GM12878 (cell line): ENCODE measurements at regions of chr16 and their contacts with region 1.

Region 1: GRCh38 chr16:67326472-67327309 is at the starts of genes KCTD19 and LRRC36:
- DNase-seq: no peak
- ATAC-seq: peak; percentile 72
- H3K4me3 ChIP-seq: peak within 1 kb of the TSS; percentile 74
- H3K27ac ChIP-seq: peak within 1 kb of the TSS; percentile 29; the same call in 1 of the 2 replicates
- H3K4me1 ChIP-seq: peaks cover 22% of the 10 kb centered on the region
- H3K27me3 ChIP-seq: no peaks in the 10 kb centered on the region; a peak in 1 of 4 replicates
- CTCF ChIP-seq: peak; percentile 31 to 51 (median 46)
- EP300 ChIP-seq: no peak
- POLR2A ChIP-seq: peak; percentile 40; the same call in 1 of the 2 replicates
- RAD21 ChIP-seq: no peak
- polyA plus RNA-seq, gene KCTD19: 1.6 to 2.5 TPM
- polyA plus RNA-seq, gene LRRC36: 0.69 to 0.79 TPM

Region 2: DNA sequence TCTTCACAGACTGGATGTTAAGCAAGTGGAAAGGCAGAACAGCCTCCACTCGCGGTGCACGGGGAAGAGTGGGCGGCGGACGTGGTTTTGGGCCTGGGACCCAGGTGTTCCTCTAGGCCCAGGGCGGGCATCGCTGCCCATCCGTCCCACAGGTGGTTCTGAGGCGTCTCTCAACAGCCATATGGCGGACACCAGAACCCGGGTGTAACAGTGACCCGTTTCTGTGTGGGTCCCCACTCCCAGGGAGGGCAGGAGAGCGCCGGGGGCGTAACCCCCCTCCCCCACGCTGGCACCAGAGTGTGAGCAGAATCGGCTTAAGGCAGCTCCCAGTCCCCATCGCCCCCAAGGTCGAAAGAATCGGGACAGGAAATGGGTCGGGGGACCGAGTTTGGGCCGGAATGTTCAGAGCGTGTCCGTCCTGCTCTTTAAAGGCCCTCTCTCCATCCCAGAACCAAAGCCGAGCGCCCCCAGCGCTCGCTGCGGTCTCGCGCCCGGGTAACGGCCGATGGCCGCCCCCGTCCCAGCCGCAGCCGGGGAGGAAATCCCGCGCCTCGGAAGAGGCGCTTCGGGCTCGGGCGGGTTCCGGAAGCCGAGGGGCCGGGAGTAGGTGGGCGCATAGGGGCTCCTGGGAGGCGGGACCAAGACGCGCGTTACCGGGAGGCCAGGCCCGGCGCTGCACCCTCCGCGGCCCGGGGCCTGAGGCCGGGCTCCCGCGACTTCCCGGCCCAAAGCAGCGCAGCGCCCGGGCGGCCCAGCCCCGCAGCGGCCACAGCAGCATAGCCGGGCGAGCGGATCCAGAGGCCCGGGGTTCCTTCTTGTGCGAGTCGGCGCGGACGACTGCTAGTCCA is 777.2 kb before region 1 on chr16 and contains the start of gene TK2:
- CTCF ChIA-PET with region 1: no interaction called
- POLR2A ChIA-PET with region 1: no interaction called
- RAD21 ChIA-PET with region 1: no interaction called
- SMC1A ChIA-PET with region 1: no interaction called
- in situ Hi-C with region 1: no loop called
- intact Hi-C with region 1: no loop called
- DNase-seq: no peak
- ATAC-seq: peak; percentile 47
- H3K4me3 ChIP-seq: peak within 1 kb of the TSS; percentile 69
- H3K27ac ChIP-seq: peak within 1 kb of the TSS; percentile 38; the same call in 1 of the 2 replicates
- H3K4me1 ChIP-seq: peaks cover 23% of the 10 kb centered on the region
- H3K27me3 ChIP-seq: no peaks in the 10 kb centered on the region
- CTCF ChIP-seq: peak in 2 of 3 experiments; percentile 15 to 19; a peak in 1 of 6 replicates
- EP300 ChIP-seq: no peak
- POLR2A ChIP-seq: peak; percentile 80
- RAD21 ChIP-seq: no peak
- polyA plus RNA-seq, gene TK2: 1.3 TPM

Region 3: GRCh38 chr16:67159593-67160406 is 166.9 kb before region 1 on chr16 and contains the starts of genes FBXL8 and TRADD:
- CTCF ChIA-PET with region 1: no interaction called
- POLR2A ChIA-PET with region 1: no interaction called
- RAD21 ChIA-PET with region 1: no interaction called
- SMC1A ChIA-PET with region 1: no interaction called
- in situ Hi-C with region 1: no loop called
- intact Hi-C with region 1: no loop called
- DNase-seq: no peak
- ATAC-seq: peak; percentile 75
- H3K4me3 ChIP-seq: peak within 1 kb of the TSS; percentile 95
- H3K27ac ChIP-seq: peak within 1 kb of the TSS; percentile 89
- H3K4me1 ChIP-seq: peaks cover 50% of the 10 kb centered on the region
- H3K27me3 ChIP-seq: peaks cover 0 to 7% of the 10 kb centered on the region in 2 experiments; a peak in 1 of 4 replicates
- CTCF ChIP-seq: peak; percentile 37 to 61 (median 50)
- EP300 ChIP-seq: no peak
- POLR2A ChIP-seq: peak; percentile 86
- RAD21 ChIP-seq: no peak
- polyA plus RNA-seq, gene FBXL8: not detected
- polyA plus RNA-seq, gene TRADD: 1.7 to 3.5 TPM

Region 4: DNA sequence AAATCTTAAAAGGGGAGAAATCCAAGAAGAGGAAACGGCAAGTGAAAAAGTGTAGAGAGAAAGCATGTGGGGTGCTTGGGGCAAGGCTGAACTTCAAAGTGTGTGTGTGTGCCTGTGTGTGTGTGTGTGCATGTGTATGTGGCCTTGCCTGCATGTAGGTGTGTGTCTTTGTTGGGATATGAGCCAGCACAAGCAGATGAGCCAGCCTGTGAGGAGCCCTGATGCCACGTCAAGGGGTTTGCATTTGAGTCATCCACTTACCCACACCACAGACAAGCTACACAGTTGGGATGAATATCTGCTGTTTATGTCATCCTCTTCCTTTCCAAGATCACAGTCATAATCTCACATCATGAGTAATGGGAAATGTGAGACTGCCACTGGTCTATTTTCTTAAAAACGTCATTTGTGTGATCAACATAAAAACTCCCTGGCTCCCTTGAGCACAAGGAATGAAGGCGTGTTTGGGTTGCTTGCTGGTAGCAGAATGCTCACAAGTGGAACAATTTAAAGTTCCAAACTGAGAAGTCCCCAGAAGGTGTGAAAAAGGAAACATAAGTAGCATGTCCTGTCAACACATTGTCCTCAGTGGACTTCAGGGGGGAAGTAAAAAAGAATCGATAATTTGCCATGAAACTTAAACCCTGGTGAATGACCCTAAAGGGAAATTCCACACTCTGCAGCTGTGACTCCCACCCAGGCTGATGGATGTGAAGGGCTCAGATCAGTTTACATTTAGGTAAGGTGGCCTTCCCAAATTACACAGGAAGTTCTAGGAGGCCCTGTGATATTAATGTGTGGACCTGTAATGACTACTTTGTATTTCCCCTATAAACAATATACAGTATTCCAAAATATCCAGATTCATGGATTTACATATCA is 14.8 kb before region 1 on chr16:
- CTCF ChIA-PET with region 1: interaction called, 20 read pairs
- POLR2A ChIA-PET with region 1: interaction called, 7 read pairs
- RAD21 ChIA-PET with region 1: interaction called, 13 read pairs
- SMC1A ChIA-PET with region 1: interaction called, 9 read pairs
- in situ Hi-C with region 1: no loop called
- intact Hi-C with region 1: no loop called
- DNase-seq: peak; percentile 93
- ATAC-seq: peak; percentile 94
- H3K4me3 ChIP-seq: no peak overlapping the region
- H3K27ac ChIP-seq: peak overlapping the region; percentile 23
- H3K4me1 ChIP-seq: peaks cover 25% of the 10 kb centered on the region
- H3K27me3 ChIP-seq: no peaks in the 10 kb centered on the region
- CTCF ChIP-seq: no peak
- EP300 ChIP-seq: peak; percentile 77 to 91
- POLR2A ChIP-seq: no peak
- RAD21 ChIP-seq: no peak

Region 5: GRCh38 chr16:67415872-67416793 is 89.4 kb after region 1 on chr16 and contains the start of gene ZDHHC1:
- CTCF ChIA-PET with region 1: no interaction called
- POLR2A ChIA-PET with region 1: no interaction called
- RAD21 ChIA-PET with region 1: no interaction called
- SMC1A ChIA-PET with region 1: no interaction called
- in situ Hi-C with region 1: no loop called
- intact Hi-C with region 1: no loop called
- DNase-seq: no peak
- ATAC-seq: peak; percentile 92
- H3K4me3 ChIP-seq: peak within 1 kb of the TSS; percentile 68; the same call in 1 of the 2 replicates
- H3K27ac ChIP-seq: no peak within 1 kb of the TSS
- H3K4me1 ChIP-seq: peaks cover 7% of the 10 kb centered on the region; the same call in 1 of the 2 replicates
- H3K27me3 ChIP-seq: peaks cover 2 to 4% of the 10 kb centered on the region in 2 experiments; a peak in 3 of 4 replicates
- CTCF ChIP-seq: peak; percentile 44 to 60 (median 48); a peak in 5 of 6 replicates
- EP300 ChIP-seq: no peak
- POLR2A ChIP-seq: no peak
- RAD21 ChIP-seq: peak; percentile 41
- polyA plus RNA-seq, gene ZDHHC1: not detected